Activated CD4-positive, alpha-beta T cell treated with anti-CD3 and anti-CD28 coated beads, Interleukin-2, amount 10 ng/mL, durations not matched to agents 24 days and 14 days (primary cell): ENCODE measurements at regions of chr2 and their contacts with region 1.

Region 1: GRCh38 chr2:70767699-70768589 is at the start of gene ADD2:
- DNase-seq: peak; percentile 84
- H3K4me3 Mint-ChIP-seq: peak within 1 kb of the TSS; percentile 89
- H3K27ac Mint-ChIP-seq: peak within 1 kb of the TSS; percentile 68
- H3K4me1 Mint-ChIP-seq: peaks cover 10% of the 10 kb centered on the region
- H3K27me3 Mint-ChIP-seq: peaks cover 43% of the 10 kb centered on the region
- total RNA-seq, gene ADD2: 6.1 and 8.2 TPM in 2 replicates

Region 2: GRCh38 chr2:70391988-70392387 is 376.0 kb before region 1 on chr2:
- intact Hi-C with region 1: no loop called
- DNase-seq: no peak
- H3K4me3 Mint-ChIP-seq: no peak overlapping the region
- H3K27ac Mint-ChIP-seq: no peak overlapping the region
- H3K4me1 Mint-ChIP-seq: no peaks in the 10 kb centered on the region
- H3K27me3 Mint-ChIP-seq: peaks cover 6% of the 10 kb centered on the region

Region 3: GRCh38 chr2:70656421-70657010 is 111.4 kb before region 1 on chr2:
- intact Hi-C with region 1: loop called (anchors 5 kb)
- DNase-seq: no peak
- H3K4me3 Mint-ChIP-seq: no peak overlapping the region
- H3K27ac Mint-ChIP-seq: no peak overlapping the region
- H3K4me1 Mint-ChIP-seq: peaks cover 9% of the 10 kb centered on the region
- H3K27me3 Mint-ChIP-seq: peaks cover 27% of the 10 kb centered on the region